OCI-LY7 (cell line): ENCODE measurements at regions of chr16 and their contacts with region 1.

Region 1: DNA sequence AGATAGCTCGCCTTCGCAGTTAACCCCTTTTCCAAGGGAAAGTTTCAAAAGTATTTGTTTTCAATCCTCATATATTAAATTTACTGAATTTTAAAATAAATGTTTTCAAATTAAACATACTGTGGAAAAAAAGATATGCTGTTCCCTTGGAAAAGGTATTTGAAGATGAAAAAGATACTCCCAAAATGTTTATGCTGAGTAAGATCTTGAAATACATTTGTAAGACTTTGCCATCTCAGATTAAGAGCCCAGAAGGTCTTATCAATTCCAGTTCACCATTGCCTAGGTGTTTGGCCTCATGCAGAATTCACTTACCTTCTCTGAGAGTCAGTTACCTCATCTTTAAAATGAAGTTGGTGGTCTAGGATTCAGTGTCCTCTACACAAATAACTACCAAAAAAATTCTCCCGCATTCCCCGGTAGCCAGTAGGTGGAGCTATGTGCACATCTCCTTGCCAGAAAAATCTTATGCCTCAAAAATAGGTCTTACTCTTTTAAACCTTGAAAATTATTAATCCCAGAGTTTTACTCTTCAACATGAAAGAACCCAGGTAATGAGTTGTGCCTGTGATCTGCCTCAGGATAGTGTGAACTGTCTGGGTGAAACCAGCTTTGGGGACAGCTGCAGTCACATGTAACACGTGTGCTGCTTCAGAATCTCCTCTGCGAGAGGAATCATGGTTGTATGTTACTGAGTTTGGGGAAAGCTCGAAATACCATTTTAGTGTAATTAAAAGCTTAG is 178.3 kb downstream of the MRTFB start:
- DNase-seq: peak; percentile 62
- H3K4me3 ChIP-seq: no peak overlapping the region
- H3K27ac ChIP-seq: no peak overlapping the region
- H3K4me1 ChIP-seq: no peaks in the 10 kb centered on the region
- CTCF ChIP-seq: peak; percentile 100

Region 2: DNA sequence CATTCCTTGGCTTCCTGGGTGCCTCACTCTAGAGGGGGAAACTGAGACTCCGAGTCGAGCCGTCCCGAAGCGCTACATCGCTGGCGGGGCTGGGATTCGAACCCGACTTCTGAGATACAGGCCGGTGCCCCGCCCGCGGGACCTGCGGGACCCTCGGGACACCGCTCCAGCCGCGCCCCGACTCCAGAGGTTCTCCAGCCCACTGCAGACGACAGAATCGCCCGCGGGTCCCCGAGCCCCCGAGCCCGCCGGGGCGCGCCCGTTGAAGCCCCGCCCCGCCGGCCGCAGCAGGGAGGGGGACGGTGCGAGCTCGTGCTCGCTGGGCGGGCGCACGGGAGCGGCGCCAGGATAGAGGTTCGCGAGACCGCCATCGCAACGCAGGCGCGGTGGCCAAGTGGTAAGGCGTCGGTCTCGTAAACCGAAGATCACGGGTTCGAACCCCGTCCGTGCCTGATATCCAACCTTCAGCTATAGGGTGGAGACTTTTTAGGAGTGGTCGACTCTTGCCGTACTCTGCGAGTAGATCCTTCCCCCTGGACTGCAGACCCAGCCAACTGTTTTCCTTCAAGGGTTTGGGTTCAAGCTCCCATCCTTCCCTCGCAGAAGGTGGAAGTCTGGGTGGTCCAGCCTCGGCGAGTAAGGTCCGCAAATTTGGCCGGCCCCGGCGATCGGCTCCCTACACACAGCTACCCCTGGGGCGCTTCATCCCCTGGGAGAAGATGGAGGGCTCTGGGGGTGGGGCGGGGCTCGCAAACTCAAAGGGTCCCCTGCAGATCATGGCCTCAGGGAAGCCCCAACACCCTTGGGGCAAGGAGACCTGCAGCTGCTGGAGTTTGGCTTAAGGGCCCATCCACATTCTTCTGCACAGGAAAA is 36.3 kb after region 1 on chr16:
- CTCF ChIA-PET with region 1: interaction called, 3 read pairs
- POLR2A ChIA-PET with region 1: no interaction called
- intact Hi-C with region 1: loop called (anchors 2 kb)
- DNase-seq: peak; percentile 91
- H3K4me3 ChIP-seq: peak overlapping the region; percentile 76
- H3K27ac ChIP-seq: peak overlapping the region; percentile 67
- H3K4me1 ChIP-seq: peaks cover 51% of the 10 kb centered on the region
- CTCF ChIP-seq: no peak

Region 3: DNA sequence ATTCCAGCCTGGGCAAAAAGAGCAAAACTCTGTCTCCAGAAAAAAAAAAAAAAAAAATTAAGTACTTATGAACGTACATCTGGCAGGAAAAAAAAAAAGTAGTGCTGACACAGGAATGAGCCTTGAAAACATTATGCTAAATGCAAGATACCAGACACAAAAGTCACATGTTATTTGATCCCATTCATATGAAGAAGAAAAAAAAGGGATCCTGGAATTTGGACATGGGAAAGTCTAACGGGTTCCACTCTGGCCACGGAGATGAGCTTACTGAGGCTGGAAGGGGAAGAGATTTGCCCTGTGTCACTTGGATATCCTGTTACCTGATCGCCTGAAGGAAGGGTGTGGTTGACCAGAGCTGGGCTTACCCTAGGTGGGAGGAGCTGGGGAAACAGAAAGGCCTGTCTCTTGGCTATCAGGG is 128.7 kb after region 1 on chr16:
- CTCF ChIA-PET with region 1: no interaction called
- POLR2A ChIA-PET with region 1: no interaction called
- intact Hi-C with region 1: loop called (anchors 1 kb)
- DNase-seq: no peak
- H3K4me3 ChIP-seq: no peak overlapping the region
- H3K27ac ChIP-seq: no peak overlapping the region
- H3K4me1 ChIP-seq: peaks cover 39% of the 10 kb centered on the region
- CTCF ChIP-seq: no peak

Region 4: GRCh38 chr16:14529010-14529669 is 279.7 kb after region 1 on chr16:
- CTCF ChIA-PET with region 1: no interaction called
- POLR2A ChIA-PET with region 1: interaction called, 4 read pairs
- intact Hi-C with region 1: loop called (anchors 1 kb)
- DNase-seq: peak; percentile 78
- H3K4me3 ChIP-seq: no peak overlapping the region
- H3K27ac ChIP-seq: no peak overlapping the region
- H3K4me1 ChIP-seq: peaks cover 22% of the 10 kb centered on the region
- CTCF ChIP-seq: peak; percentile 93

Region 5: DNA sequence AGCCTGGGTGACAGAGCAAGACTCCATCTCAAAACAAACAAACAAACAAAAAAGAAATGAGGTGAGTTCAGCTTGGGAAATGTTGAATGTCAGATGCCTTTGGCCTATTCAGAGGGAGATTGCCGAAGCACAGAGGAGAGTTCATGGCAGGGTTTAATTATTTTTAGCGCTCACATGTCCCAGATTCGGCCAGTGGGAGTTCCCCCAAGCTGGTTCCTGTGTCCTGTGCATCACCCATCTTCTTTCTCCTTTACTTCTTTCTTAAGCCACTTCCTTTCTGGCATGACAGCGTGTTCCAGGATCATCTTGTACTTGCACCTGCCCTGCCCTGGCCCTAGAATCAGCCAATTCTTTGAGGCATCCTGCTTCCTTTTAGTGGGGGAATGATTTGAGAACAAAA is 1155.3 kb after region 1 on chr16:
- CTCF ChIA-PET with region 1: no interaction called
- POLR2A ChIA-PET with region 1: no interaction called
- intact Hi-C with region 1: no loop called
- DNase-seq: no peak
- H3K4me3 ChIP-seq: no peak overlapping the region
- H3K27ac ChIP-seq: no peak overlapping the region
- H3K4me1 ChIP-seq: peaks cover 10% of the 10 kb centered on the region
- CTCF ChIP-seq: no peak